Natural killer cell (primary cell): ENCODE measurements at regions of chr1 and their contacts with region 1.

Region 1: DNA sequence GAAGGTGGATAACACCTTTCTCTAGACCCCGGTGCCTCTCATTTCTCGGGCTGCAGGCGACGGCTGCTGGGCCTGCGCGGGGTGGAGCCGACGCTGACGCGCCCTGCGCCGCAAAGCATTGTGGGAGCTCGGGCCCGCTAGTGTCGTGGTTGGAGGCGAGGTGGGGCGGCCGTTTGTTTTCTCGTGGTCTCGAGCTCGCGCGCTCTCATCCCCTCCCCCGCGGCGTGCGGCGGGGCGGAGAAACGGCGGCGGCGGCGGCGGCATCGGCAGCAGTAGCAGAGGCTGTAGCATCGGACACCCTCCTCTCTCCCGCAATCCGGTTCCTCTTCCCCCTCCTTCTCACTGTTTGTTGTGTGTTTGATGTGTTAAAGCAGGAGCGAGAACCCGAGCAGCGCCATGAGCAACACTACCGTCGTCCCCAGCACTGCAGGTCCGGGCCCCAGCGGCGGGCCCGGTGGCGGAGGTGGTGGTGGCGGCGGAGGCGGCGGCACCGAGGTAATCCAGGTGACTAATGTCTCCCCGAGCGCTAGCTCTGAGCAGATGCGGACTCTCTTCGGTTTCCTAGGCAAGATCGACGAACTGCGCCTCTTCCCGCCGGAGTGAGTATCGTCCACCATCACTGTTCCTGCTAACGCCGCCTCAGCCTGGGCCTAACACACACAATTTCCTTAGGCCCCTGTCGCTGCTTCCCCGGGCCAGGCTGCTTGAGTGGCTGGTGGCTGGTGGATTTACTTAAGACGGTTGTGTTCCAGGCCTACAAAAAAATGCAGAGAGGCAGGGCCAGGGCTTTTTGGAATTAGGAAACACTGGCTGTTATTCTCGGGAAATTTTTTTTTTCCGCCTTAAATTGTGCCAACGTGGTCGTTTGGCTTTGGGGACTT is at the start of gene SRSF11:
- DNase-seq: peak; percentile 97 to 98
- ATAC-seq: peak; percentile 94 to 99 (median 96)
- H3K4me3 ChIP-seq: peak within 1 kb of the TSS; percentile 77
- H3K4me3 Mint-ChIP-seq: peak within 1 kb of the TSS; percentile 96
- H3K27ac ChIP-seq: peak within 1 kb of the TSS; percentile 98
- H3K27ac Mint-ChIP-seq: peak within 1 kb of the TSS; percentile 93 to 97
- H3K4me1 ChIP-seq: peaks cover 10% of the 10 kb centered on the region
- H3K4me1 Mint-ChIP-seq: peaks cover 40 to 49% of the 10 kb centered on the region in 2 donors
- H3K27me3 ChIP-seq: no peaks in the 10 kb centered on the region
- H3K27me3 Mint-ChIP-seq: no peaks in the 10 kb centered on the region
- CTCF ChIP-seq: peak; percentile 14
- total RNA-seq, gene SRSF11: 347 to 374 (median 359) TPM

Region 2: DNA sequence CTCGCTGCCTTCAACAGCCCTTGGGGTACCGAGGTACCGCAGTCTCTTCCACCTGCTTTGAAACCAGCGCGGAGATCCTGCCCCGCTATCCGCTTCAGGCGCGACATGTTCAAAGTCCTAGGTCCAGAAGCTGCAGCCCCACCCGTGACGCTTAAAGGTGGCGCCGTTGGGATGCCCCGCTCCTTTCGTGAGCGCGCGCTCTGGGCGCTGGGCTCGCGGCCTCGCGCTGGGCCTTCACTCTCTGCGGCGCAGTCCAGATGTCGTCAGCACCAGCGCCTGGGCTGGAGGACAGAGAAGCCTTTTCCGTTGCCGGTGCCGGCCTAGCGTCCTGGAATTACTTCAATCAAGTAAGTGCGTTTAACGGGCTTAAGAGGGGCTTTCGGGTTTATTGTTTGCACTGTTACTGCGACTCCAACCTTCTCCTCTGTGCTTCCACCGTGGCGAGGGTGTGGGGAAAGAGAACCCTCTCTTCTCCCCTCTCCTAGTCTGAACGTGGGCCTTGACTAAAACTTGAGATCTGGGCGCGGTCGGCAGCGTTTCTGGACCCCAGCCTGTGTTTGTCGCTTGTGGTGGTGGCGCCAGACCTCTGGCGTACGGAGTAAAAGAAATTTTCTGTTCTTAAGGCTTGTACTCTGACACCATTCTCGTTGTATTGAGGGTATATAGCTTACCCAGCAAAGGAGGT is 15.9 kb before region 1 on chr1 and contains the start of gene LRRC40:
- intact Hi-C with region 1: loop called (anchors 1 kb)
- DNase-seq: peak; percentile 97 to 98
- ATAC-seq: peak; percentile 96 to 100 (median 97)
- H3K4me3 ChIP-seq: peak within 1 kb of the TSS; percentile 58
- H3K4me3 Mint-ChIP-seq: peak within 1 kb of the TSS; percentile 97
- H3K27ac ChIP-seq: peak within 1 kb of the TSS; percentile 88
- H3K27ac Mint-ChIP-seq: peak within 1 kb of the TSS; percentile 98 to 99
- H3K4me1 ChIP-seq: peaks cover 21% of the 10 kb centered on the region
- H3K4me1 Mint-ChIP-seq: peaks cover 41 to 61% of the 10 kb centered on the region in 2 donors
- H3K27me3 ChIP-seq: no peaks in the 10 kb centered on the region
- H3K27me3 Mint-ChIP-seq: no peaks in the 10 kb centered on the region
- CTCF ChIP-seq: no peak
- total RNA-seq, gene LRRC40: 15.5 to 18.4 (median 16.5) TPM

Region 3: GRCh38 chr1:70354332-70355110 is 133.0 kb after region 1 on chr1 and contains the start of gene ANKRD13C:
- intact Hi-C with region 1: loop called (anchors 5 kb)
- DNase-seq: peak; percentile 87 to 96
- ATAC-seq: peak; percentile 90 to 93 (median 90)
- H3K4me3 ChIP-seq: peak within 1 kb of the TSS; percentile 87
- H3K4me3 Mint-ChIP-seq: peak within 1 kb of the TSS; percentile 98
- H3K27ac ChIP-seq: peak within 1 kb of the TSS; percentile 91
- H3K27ac Mint-ChIP-seq: peak within 1 kb of the TSS; percentile 99
- H3K4me1 ChIP-seq: peaks cover 19% of the 10 kb centered on the region
- H3K4me1 Mint-ChIP-seq: peaks cover 30 to 35% of the 10 kb centered on the region in 2 donors
- H3K27me3 ChIP-seq: no peaks in the 10 kb centered on the region
- H3K27me3 Mint-ChIP-seq: no peaks in the 10 kb centered on the region
- CTCF ChIP-seq: no peak
- total RNA-seq, gene ANKRD13C: 32.2 to 33.7 (median 32.8) TPM

Region 4: GRCh38 chr1:70410604-70411359 is 189.3 kb after region 1 on chr1 and contains the start of gene CTH:
- intact Hi-C with region 1: loop called (anchors 1 kb)
- DNase-seq: peak; percentile 92 to 96
- ATAC-seq: peak; percentile 93 to 97 (median 93)
- H3K4me3 ChIP-seq: peak within 1 kb of the TSS; percentile 69
- H3K4me3 Mint-ChIP-seq: peak within 1 kb of the TSS; percentile 99
- H3K27ac ChIP-seq: peak within 1 kb of the TSS; percentile 91
- H3K27ac Mint-ChIP-seq: peak within 1 kb of the TSS; percentile 90 to 93
- H3K4me1 ChIP-seq: peaks cover 8% of the 10 kb centered on the region
- H3K4me1 Mint-ChIP-seq: peaks cover 15 to 18% of the 10 kb centered on the region in 2 donors
- H3K27me3 ChIP-seq: peaks cover 4% of the 10 kb centered on the region
- H3K27me3 Mint-ChIP-seq: peaks cover 13 to 19% of the 10 kb centered on the region in 2 donors
- CTCF ChIP-seq: no peak
- total RNA-seq, gene CTH: 3.0 to 7.6 (median 3.6) TPM

Region 5: DNA sequence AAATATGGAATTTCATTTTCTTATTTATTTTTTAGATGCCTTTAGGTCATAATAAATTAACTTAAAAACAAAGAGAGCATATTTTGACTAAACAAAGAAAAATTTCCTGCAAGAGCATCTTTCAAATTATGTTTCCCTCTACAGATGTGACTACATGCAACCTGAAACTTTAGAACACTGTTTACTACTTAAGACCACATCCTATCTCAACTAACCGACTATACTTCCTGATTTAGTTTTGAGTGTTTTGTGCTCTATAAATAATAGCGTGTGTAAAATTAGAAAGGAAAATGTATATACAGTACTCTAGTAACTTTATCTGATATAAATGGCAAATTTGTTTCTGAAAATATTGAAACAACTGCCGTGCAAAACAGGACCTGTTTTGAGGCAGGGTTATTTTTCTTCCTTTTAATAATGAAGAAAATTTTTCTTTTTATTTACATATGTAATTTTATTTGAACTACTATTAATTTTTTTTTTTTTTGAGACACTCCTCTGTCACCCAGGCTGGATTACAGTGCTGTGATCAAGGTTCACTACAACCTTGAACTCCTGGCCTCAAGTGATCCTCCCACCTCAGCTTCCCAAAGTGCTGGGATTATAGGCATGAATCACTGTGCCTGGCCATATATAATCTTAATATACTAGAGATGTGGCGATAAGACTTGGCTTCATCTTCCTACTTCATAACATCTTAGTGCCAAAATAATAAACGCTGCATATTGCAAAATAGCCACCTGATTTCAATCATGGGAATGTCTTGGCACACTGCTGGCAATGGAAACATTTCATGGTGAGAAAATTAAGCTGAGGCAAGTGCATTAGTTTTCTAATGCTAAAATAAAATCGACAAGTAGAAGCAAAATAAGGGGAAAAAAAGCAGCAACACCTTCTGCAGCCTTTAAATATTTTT is 847.1 kb after region 1 on chr1:
- intact Hi-C with region 1: loop called (anchors 5 kb)
- DNase-seq: no peak
- ATAC-seq: peak in 1 of 3 donors; percentile 32
- H3K4me3 ChIP-seq: no peak overlapping the region
- H3K4me3 Mint-ChIP-seq: no peak overlapping the region
- H3K27ac ChIP-seq: no peak overlapping the region
- H3K27ac Mint-ChIP-seq: peak overlapping the region in 1 of 2 donors; percentile 53
- H3K4me1 ChIP-seq: no peaks in the 10 kb centered on the region
- H3K4me1 Mint-ChIP-seq: peaks cover 22 to 30% of the 10 kb centered on the region in 2 donors
- H3K27me3 ChIP-seq: no peaks in the 10 kb centered on the region
- H3K27me3 Mint-ChIP-seq: no peaks in the 10 kb centered on the region
- CTCF ChIP-seq: no peak

Region 6: DNA sequence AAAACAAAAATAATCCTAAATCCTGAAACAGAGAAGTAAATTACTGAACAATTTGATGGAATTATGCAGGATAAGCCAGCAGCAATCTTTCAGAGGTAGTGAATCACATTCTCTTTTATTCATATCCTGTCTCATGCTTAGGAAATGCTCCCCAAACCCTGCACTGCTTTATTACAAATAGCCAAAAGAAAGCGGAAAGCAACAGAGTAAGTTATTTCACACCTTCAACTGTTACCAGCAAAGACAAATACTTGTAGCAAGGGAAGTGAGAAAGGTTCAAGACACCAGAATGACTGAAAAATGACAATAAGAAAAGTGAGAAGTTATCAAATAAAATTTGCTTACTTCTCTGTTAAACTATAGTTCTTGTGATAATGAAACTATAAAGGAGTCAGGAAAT is 853.2 kb after region 1 on chr1:
- intact Hi-C with region 1: loop called (anchors 5 kb)
- DNase-seq: no peak
- ATAC-seq: peak; percentile 64 to 73 (median 70)
- H3K4me3 ChIP-seq: no peak overlapping the region
- H3K4me3 Mint-ChIP-seq: peak overlapping the region; percentile 22
- H3K27ac ChIP-seq: no peak overlapping the region
- H3K27ac Mint-ChIP-seq: peak overlapping the region; percentile 29 to 86
- H3K4me1 ChIP-seq: peaks cover 3% of the 10 kb centered on the region
- H3K4me1 Mint-ChIP-seq: peaks cover 46 to 48% of the 10 kb centered on the region in 2 donors
- H3K27me3 ChIP-seq: no peaks in the 10 kb centered on the region
- H3K27me3 Mint-ChIP-seq: no peaks in the 10 kb centered on the region
- CTCF ChIP-seq: no peak